Prostate gland (tissue), 2 donors: ENCODE measurements at regions of chr9 and their contacts with region 1.

Region 1: DNA sequence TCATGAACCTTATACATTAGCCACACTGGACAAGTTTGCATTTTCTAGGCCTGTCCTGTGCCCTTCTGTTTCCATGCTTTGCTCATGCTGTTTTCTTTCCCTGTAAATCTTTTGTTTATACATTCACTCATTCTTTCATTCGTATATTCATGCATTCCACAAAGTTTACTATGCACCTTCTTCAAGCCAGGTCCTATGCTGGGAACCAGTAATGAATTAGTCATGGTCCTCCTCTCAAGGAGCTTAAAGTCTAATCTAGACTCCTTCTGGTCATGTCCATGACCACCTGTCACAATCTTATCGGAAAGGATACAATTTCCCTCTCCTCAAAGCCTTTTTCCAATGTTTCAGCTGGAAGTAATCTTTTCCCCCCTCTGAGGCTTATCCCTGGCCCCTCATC is 9.1 kb upstream of the XPA start:
- DNase-seq: no peak
- H3K4me3 ChIP-seq: no peak overlapping the region
- H3K27ac ChIP-seq: no peak overlapping the region
- H3K4me1 ChIP-seq: no peaks in the 10 kb centered on the region
- H3K27me3 ChIP-seq: no peaks in the 10 kb centered on the region
- CTCF ChIP-seq: no peak
- POLR2A ChIP-seq: no peak

Region 2: GRCh38 chr9:97900738-97901565 is 194.7 kb after region 1 on chr9:
- intact Hi-C with region 1: loop called (anchors 2 kb)
- DNase-seq: no peak
- H3K4me3 ChIP-seq: no peak overlapping the region
- H3K27ac ChIP-seq: no peak overlapping the region
- H3K4me1 ChIP-seq: no peaks in the 10 kb centered on the region
- H3K27me3 ChIP-seq: no peaks in the 10 kb centered on the region
- CTCF ChIP-seq: peak; percentile 22 to 67 (median 51)
- POLR2A ChIP-seq: no peak